ENCODE measurements at regions of chr10 and their contacts with region 1.

Region 1: GRCh38 chr10:123994417-123995081 is 98.8 kb downstream of the CHST15 start:
- DNase-seq: peak; percentile 97
- H3K4me3 ChIP-seq: peak overlapping the region in 6 of 8 donors; percentile 3 to 59 (median 23)
- H3K27ac ChIP-seq: peak overlapping the region in 4 of 8 donors; percentile 80 to 94 (median 92)
- H3K4me1 ChIP-seq: peaks cover 15 to 63% (median 39%) of the 10 kb centered on the region in 6 donors
- H3K27me3 ChIP-seq: peaks cover 0 to 66% (median 44%) of the 10 kb centered on the region in 7 donors
- CTCF ChIP-seq: peak; percentile 98 to 100 (median 99)
- POLR2A ChIP-seq: no peak

Region 2: GRCh38 chr10:123472606-123473005 is 521.9 kb before region 1 on chr10:
- intact Hi-C with region 1: no loop called
- DNase-seq: no peak
- H3K4me3 ChIP-seq: no peak overlapping the region
- H3K27ac ChIP-seq: no peak overlapping the region
- H3K4me1 ChIP-seq: no peaks in the 10 kb centered on the region
- H3K27me3 ChIP-seq: peaks cover 0 to 8% (median 0%) of the 10 kb centered on the region in 7 donors
- CTCF ChIP-seq: no peak
- POLR2A ChIP-seq: no peak

Region 3: DNA sequence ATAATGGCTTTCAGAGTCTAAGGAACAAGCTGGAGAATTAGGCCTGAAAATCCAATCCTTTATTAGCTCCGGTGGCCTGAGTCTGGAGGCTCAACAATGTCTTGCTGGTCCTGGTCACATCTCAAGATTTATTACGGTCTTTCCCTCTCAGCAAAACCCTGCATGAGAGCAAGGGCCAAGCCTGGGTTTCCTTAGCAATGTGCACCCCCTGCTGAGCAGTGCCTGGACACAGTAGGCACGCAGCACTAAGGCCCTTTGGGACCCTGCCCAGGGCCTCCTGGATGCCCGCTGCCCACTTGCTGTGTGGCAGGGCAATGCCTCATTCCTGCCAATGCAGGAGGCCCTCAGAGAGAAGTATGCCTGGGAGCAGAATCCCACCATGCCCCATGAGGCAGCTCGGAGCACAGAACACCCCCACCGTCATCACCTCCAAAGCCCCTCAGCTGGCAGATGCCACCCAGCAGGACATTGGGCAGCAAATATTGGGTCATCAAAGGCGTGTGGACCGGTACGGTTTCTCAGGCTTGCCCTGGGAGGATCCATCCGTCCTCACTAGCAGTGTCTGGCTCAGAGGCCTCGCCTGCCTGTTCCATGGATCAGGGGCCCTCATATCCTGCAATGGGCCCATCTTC is 267.8 kb after region 1 on chr10:
- intact Hi-C with region 1: loop called (anchors 5 kb)
- DNase-seq: no peak
- H3K4me3 ChIP-seq: no peak overlapping the region
- H3K27ac ChIP-seq: no peak overlapping the region
- H3K4me1 ChIP-seq: peaks cover 0 to 20% (median 2%) of the 10 kb centered on the region in 6 donors
- H3K27me3 ChIP-seq: no peaks in the 10 kb centered on the region
- CTCF ChIP-seq: peak in 7 of 11 experiments; percentile 18 to 42 (median 39)
- POLR2A ChIP-seq: no peak

Region 4: GRCh38 chr10:124388823-124389612 is 394.5 kb after region 1 on chr10:
- intact Hi-C with region 1: loop called (anchors 2 kb)
- DNase-seq: peak; percentile 99
- H3K4me3 ChIP-seq: peak overlapping the region; percentile 32 to 75 (median 53)
- H3K27ac ChIP-seq: peak overlapping the region in 3 of 8 donors; percentile 41 to 75 (median 58)
- H3K4me1 ChIP-seq: peaks cover 0 to 16% (median 13%) of the 10 kb centered on the region in 6 donors
- H3K27me3 ChIP-seq: peaks cover 0 to 9% (median 0%) of the 10 kb centered on the region in 7 donors
- CTCF ChIP-seq: peak; percentile 88 to 99 (median 98)
- POLR2A ChIP-seq: no peak

Measured in spleen (tissue), 13 donors.